Breast epithelium (tissue), 4 donors: ENCODE measurements at regions of chr10 and their contacts with region 1.

Region 1: GRCh38 chr10:91711885-91712680 is 79.2 kb upstream of the PPP1R3C start:
- DNase-seq: no peak
- H3K4me3 ChIP-seq: peak overlapping the region in 1 of 3 donors; percentile 45
- H3K27ac ChIP-seq: peak overlapping the region in 1 of 2 donors; percentile 50
- H3K4me1 ChIP-seq: no peaks in the 10 kb centered on the region
- H3K27me3 ChIP-seq: no peaks in the 10 kb centered on the region
- CTCF ChIP-seq: no peak
- POLR2A ChIP-seq: no peak

Region 2: DNA sequence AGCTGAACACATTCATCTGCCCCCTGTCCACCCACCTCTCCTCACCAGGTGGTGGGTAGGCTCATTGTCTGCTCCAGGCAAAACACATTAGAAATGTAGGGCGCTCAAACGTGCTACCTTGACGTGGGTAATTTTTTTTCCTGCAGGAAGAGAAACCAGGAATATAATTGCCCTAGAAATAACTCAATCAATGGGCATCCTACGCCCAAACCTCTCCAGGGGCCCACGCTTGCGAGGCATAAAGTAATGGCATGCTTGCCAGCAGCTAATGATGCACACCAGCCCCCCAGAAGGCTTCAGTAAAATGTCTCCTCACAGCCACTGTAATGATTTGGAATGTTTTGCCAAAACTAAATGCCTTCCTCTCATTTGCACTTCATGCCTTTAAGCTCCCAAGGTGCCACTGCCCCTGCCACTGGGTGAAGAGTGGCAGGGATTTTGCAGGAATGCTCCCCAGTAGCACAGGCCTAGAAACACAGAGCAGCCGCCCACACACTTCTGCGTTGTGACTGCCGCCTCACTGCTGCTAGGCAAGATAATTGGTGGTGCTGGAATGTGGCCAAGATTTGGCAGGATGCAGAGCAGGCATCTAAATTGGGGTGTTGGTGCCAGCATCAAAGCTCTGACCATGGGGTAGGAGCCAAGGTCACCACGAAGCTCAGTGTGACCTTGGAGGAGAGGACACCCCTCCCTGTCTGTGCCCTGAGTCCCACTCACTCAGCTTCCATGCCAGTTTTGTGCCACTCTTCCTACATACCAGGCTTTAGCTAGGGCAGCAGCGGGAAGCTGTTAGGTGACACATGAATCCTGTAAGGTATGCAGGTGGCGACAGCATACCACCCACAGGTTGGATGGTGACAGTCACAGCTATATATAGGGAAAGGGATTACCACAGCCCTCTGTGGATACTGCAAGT is 30.5 kb before region 1 on chr10:
- intact Hi-C with region 1: loop called (anchors 2 kb)
- DNase-seq: peak in 1 of 2 donors; percentile 63
- H3K4me3 ChIP-seq: no peak overlapping the region
- H3K27ac ChIP-seq: peak overlapping the region in 1 of 2 donors; percentile 25
- H3K4me1 ChIP-seq: no peaks in the 10 kb centered on the region
- H3K27me3 ChIP-seq: no peaks in the 10 kb centered on the region
- CTCF ChIP-seq: no peak
- POLR2A ChIP-seq: no peak